ENCODE measurements at regions of chrX and their contacts with region 1.

Region 1: DNA sequence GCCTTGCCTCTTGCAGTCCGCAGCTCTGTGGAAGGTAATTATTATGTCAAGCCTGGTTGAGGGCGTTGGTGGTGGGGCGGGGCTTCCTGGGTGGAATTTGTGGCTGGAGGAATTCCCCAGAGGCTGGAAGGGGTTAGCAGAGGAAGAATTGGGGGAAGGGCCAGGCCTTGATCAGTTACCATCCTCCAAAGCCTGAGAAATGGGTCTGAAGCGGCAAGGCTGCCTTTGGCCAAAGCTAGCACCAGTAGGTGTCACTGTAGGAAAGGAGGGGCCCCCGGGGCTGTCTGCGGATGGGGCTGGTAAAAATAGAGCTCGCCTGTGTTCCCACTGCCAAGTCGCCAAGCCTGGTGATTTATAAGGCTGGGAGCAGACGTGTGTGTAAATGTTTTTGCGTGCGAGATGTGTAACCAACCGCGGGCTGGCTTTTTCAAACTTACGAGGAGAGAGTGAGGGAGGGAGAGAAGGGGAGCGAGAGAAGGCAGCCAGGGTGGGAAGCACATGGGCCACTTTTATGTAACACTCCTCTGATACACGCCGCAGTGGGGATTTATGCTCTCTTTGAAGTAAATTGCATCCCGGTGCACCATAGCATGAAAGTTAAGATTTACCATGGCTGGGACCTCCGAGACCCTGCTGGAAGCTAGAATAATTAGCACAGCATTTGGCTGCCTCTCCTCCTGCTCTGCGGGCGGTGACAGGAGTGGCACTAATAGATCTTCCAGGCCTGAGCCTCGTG is 366.9 kb downstream of the BCOR start:
- DNase-seq: peak; percentile 67
- H3K4me3 ChIP-seq: no peak overlapping the region
- H3K27ac ChIP-seq: peak overlapping the region in 3 of 4 donors; percentile 41 to 59 (median 54)
- H3K4me1 ChIP-seq: peaks cover 0 to 24% (median 3%) of the 10 kb centered on the region in 4 donors
- H3K27me3 ChIP-seq: no peaks in the 10 kb centered on the region
- CTCF ChIP-seq: peak in 4 of 5 experiments; percentile 30 to 49 (median 46)
- EP300 ChIP-seq: no peak
- POLR2A ChIP-seq: no peak

Region 2: DNA sequence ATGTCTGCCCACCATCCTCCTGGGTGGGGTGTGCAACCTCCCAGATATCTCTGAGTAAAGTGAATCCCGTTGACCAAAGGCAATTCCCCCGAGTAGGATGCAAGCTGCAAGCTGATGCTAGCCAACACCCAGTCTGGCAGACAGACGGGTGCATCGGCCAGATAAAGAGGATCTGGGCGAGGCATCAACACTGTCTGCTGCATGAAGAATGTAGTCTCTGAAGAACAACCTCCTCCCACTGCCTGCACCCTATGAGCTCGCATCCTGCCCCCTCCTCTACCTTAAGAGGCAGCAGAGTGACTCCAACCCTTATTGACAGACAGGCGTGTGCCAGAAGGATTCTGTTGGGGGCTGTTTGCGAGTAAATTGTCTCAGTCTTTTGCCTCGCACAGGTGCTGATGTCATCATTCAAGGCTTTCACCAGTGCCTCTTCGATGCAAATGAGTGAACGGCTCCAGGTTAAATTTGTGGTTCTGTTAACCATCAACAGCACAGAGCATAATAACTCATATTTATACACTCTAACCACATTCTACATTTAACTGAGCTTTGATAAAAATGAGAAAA is 180.0 kb before region 1 on chrX:
- in situ Hi-C with region 1: no loop called
- intact Hi-C with region 1: no loop called
- DNase-seq: no peak
- H3K4me3 ChIP-seq: no peak overlapping the region
- H3K27ac ChIP-seq: no peak overlapping the region
- H3K4me1 ChIP-seq: no peaks in the 10 kb centered on the region
- H3K27me3 ChIP-seq: no peaks in the 10 kb centered on the region
- CTCF ChIP-seq: no peak
- EP300 ChIP-seq: no peak
- POLR2A ChIP-seq: no peak

Region 3: DNA sequence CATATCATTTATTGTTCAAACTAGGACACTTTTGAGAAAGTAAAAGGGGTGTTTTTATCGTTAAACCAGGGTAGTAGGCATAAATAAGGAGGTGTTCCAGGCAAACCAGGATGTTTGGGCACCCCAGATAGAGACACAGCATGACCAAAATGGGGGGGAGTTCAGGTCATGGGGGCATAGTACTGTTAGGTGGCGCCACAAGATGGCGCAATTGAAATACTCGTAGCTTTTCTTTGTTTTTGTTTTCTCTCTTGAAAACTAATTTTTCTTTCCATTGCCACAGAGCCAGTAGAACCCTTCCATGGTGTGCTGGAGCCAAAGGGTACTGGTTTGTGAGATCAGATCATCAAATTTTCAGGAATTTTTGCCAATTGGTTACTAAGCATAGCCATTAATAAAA is 83.6 kb after region 1 on chrX:
- in situ Hi-C with region 1: no loop called
- intact Hi-C with region 1: no loop called
- DNase-seq: peak; percentile 27
- H3K4me3 ChIP-seq: no peak overlapping the region
- H3K27ac ChIP-seq: peak overlapping the region in 2 of 4 donors; percentile 33 to 34
- H3K4me1 ChIP-seq: peaks cover 0 to 4% (median 0%) of the 10 kb centered on the region in 4 donors
- H3K27me3 ChIP-seq: no peaks in the 10 kb centered on the region
- CTCF ChIP-seq: peak; percentile 36 to 58 (median 42)
- EP300 ChIP-seq: no peak
- POLR2A ChIP-seq: no peak

Region 4: GRCh38 chrX:39907964-39908616 is 177.3 kb after region 1 on chrX:
- in situ Hi-C with region 1: no loop called
- intact Hi-C with region 1: loop called (anchors 10 kb)
- DNase-seq: peak; percentile 32
- H3K4me3 ChIP-seq: no peak overlapping the region
- H3K27ac ChIP-seq: peak overlapping the region in 2 of 4 donors; percentile 9 to 55
- H3K4me1 ChIP-seq: peaks cover 3 to 14% (median 11%) of the 10 kb centered on the region in 4 donors
- H3K27me3 ChIP-seq: no peaks in the 10 kb centered on the region
- CTCF ChIP-seq: no peak
- EP300 ChIP-seq: no peak
- POLR2A ChIP-seq: no peak